GM12878 (cell line): ENCODE measurements at regions of chr14 and their contacts with region 1.

Region 1: DNA sequence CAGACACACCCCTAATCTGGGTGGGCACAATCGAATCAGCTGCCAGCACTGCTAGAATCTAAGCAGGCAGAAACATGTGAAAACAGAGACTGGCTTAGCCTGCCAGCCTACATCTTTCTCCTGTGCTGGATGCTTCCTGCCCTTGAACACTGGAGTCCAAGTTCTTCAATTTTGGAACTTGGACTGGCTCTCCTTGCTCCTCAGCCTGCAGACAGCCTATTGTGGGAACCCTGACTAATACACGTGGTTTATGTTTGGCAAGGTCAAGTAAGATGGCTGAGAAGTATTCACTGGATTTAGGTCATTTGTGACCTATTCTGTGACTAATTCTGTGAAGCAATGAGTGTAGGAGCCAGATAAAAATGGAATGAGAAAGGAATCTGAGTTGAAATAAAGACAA is 11.0 kb downstream of the GPR135 start:
- DNase-seq: no peak
- ATAC-seq: no peak
- H3K4me3 ChIP-seq: no peak overlapping the region
- H3K27ac ChIP-seq: no peak overlapping the region
- H3K4me1 ChIP-seq: no peaks in the 10 kb centered on the region
- H3K27me3 ChIP-seq: no peaks in the 10 kb centered on the region
- CTCF ChIP-seq: no peak
- EP300 ChIP-seq: no peak
- POLR2A ChIP-seq: no peak
- RAD21 ChIP-seq: no peak

Region 2: DNA sequence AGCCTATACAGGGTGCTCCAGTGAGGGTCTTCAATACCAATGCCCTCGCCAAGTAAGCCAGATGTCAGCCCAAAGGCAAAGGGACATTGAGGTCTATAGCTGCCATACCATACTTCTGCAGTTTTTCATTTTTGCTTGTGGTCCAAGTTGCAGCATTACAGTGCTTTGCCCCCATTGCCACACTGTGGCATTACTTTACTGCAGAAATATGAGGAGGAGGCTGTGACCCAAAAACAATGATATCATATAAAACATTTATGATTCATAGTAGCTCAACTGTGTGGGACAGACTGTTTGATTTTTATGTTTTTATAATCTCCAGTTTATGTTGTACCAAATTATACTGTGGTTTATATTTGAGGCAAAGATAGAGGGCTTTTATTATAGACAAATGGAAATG is 962.5 kb before region 1 on chr14:
- CTCF ChIA-PET with region 1: no interaction called
- POLR2A ChIA-PET with region 1: no interaction called
- RAD21 ChIA-PET with region 1: no interaction called
- SMC1A ChIA-PET with region 1: no interaction called
- in situ Hi-C with region 1: loop called (anchors 10 kb)
- intact Hi-C with region 1: no loop called
- DNase-seq: no peak
- ATAC-seq: no peak
- H3K4me3 ChIP-seq: no peak overlapping the region
- H3K27ac ChIP-seq: no peak overlapping the region
- H3K4me1 ChIP-seq: no peaks in the 10 kb centered on the region
- H3K27me3 ChIP-seq: no peaks in the 10 kb centered on the region
- CTCF ChIP-seq: no peak
- EP300 ChIP-seq: no peak
- POLR2A ChIP-seq: no peak
- RAD21 ChIP-seq: no peak

Region 3: GRCh38 chr14:59422069-59422881 is 31.9 kb before region 1 on chr14:
- CTCF ChIA-PET with region 1: no interaction called
- POLR2A ChIA-PET with region 1: no interaction called
- RAD21 ChIA-PET with region 1: no interaction called
- SMC1A ChIA-PET with region 1: no interaction called
- in situ Hi-C with region 1: no loop called
- intact Hi-C with region 1: no loop called
- DNase-seq: no peak
- ATAC-seq: peak; percentile 75
- H3K4me3 ChIP-seq: no peak overlapping the region
- H3K27ac ChIP-seq: no peak overlapping the region
- H3K4me1 ChIP-seq: peaks cover 5% of the 10 kb centered on the region; the same call in 1 of the 2 replicates
- H3K27me3 ChIP-seq: no peaks in the 10 kb centered on the region
- CTCF ChIP-seq: peak in 2 of 3 experiments; percentile 13 to 43; a peak in 3 of 6 replicates
- EP300 ChIP-seq: no peak
- POLR2A ChIP-seq: no peak
- RAD21 ChIP-seq: peak; percentile 56

Region 4: GRCh38 chr14:59529189-59529588 is 75.1 kb after region 1 on chr14:
- CTCF ChIA-PET with region 1: no interaction called
- POLR2A ChIA-PET with region 1: no interaction called
- RAD21 ChIA-PET with region 1: no interaction called
- SMC1A ChIA-PET with region 1: no interaction called
- in situ Hi-C with region 1: no loop called
- intact Hi-C with region 1: no loop called
- DNase-seq: no peak
- ATAC-seq: peak; percentile 60
- H3K4me3 ChIP-seq: no peak overlapping the region
- H3K27ac ChIP-seq: no peak overlapping the region
- H3K4me1 ChIP-seq: no peaks in the 10 kb centered on the region
- H3K27me3 ChIP-seq: no peaks in the 10 kb centered on the region; a peak in 2 of 4 replicates
- CTCF ChIP-seq: no peak
- EP300 ChIP-seq: no peak
- POLR2A ChIP-seq: no peak
- RAD21 ChIP-seq: no peak